ENCODE measurements at regions of chr6 and their contacts with region 1.

Region 1: GRCh38 chr6:90285611-90286381 is 10.8 kb downstream of the BACH2 start:
- DNase-seq: peak; percentile 89
- H3K4me3 Mint-ChIP-seq: no peak overlapping the region
- H3K27ac Mint-ChIP-seq: no peak overlapping the region
- H3K4me1 Mint-ChIP-seq: peaks cover 9% of the 10 kb centered on the region
- H3K27me3 Mint-ChIP-seq: no peaks in the 10 kb centered on the region
- CTCF ChIP-seq: no peak

Region 2: GRCh38 chr6:90088009-90088408 is 197.8 kb before region 1 on chr6:
- CTCF ChIA-PET with region 1: interaction called, 3 read pairs
- POLR2A ChIA-PET with region 1: interaction called, 16 read pairs
- intact Hi-C with region 1: no loop called
- DNase-seq: peak; percentile 95
- H3K4me3 Mint-ChIP-seq: peak overlapping the region; percentile 22
- H3K27ac Mint-ChIP-seq: peak overlapping the region; percentile 99
- H3K4me1 Mint-ChIP-seq: peaks cover 35% of the 10 kb centered on the region
- H3K27me3 Mint-ChIP-seq: no peaks in the 10 kb centered on the region
- CTCF ChIP-seq: no peak

Region 3: DNA sequence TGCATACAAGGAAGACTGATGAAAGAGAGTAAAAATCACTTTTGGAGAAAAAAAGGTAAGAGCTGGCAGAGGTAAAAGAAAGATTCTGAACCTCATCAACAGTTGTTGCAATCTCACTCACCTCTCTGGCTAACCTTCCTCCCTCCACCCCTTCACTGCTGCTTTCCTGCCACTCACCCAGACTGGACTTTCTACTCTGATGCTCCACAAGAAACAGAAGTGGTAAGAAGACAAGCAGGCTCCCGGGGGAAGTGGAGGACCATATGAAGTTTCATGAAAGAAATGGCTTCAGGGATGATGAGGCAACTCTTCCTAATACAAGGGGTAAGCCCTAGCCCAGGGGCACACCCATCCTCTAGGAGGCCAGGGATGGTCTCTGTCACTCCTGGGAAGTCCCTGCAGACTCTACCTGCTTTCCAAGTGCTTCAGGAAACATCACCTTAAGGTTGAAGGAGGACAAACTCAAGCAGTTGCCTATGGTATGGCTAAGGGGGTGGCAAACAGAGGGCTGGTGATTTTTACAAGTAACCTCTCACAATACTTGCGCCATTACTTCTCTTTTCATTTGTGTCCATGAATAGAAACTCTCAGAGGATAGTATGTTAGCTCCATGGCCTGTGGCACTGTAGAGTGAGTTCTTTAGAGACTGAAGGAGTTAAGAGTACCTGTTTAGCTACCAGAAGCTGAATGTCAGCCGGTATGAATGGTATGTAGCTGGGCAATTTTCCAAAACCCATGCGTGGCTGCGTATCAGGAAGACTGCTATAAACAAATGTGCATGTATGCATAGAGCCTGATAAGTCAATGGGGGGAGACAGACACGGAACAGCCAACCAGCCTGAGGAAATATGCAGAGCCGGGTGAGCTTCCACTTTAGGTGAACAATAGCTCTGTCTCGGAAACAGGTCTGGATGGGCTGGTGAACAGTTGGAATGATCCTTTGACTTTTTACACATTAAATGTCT is 101.2 kb before region 1 on chr6:
- CTCF ChIA-PET with region 1: interaction called, 5 read pairs
- POLR2A ChIA-PET with region 1: interaction called, 6 read pairs
- intact Hi-C with region 1: loop called (anchors 5 kb)
- DNase-seq: peak; percentile 38
- H3K4me3 Mint-ChIP-seq: no peak overlapping the region
- H3K27ac Mint-ChIP-seq: no peak overlapping the region
- H3K4me1 Mint-ChIP-seq: peaks cover 21% of the 10 kb centered on the region
- H3K27me3 Mint-ChIP-seq: no peaks in the 10 kb centered on the region
- CTCF ChIP-seq: no peak

Region 4: GRCh38 chr6:90296346-90297114 is 10.7 kb after region 1 on chr6 and contains the start of gene BACH2:
- CTCF ChIA-PET with region 1: interaction called, 10 read pairs
- POLR2A ChIA-PET with region 1: interaction called, 24 read pairs
- intact Hi-C with region 1: no loop called
- DNase-seq: peak; percentile 89
- H3K4me3 Mint-ChIP-seq: peak within 1 kb of the TSS; percentile 76
- H3K27ac Mint-ChIP-seq: peak within 1 kb of the TSS; percentile 39
- H3K4me1 Mint-ChIP-seq: peaks cover 9% of the 10 kb centered on the region
- H3K27me3 Mint-ChIP-seq: peaks cover 17% of the 10 kb centered on the region
- CTCF ChIP-seq: no peak
- total RNA-seq, gene BACH2: 7.5 and 9.9 TPM in 2 replicates

Region 5: GRCh38 chr6:90319044-90319443 is 33.2 kb after region 1 on chr6:
- CTCF ChIA-PET with region 1: no interaction called
- POLR2A ChIA-PET with region 1: no interaction called
- intact Hi-C with region 1: no loop called
- DNase-seq: no peak
- H3K4me3 Mint-ChIP-seq: no peak overlapping the region
- H3K27ac Mint-ChIP-seq: no peak overlapping the region
- H3K4me1 Mint-ChIP-seq: no peaks in the 10 kb centered on the region
- H3K27me3 Mint-ChIP-seq: peaks cover 11% of the 10 kb centered on the region
- CTCF ChIP-seq: no peak

Measured in MCF 10A (cell line).